A673 (cell line): ENCODE measurements at regions of chr1 and their contacts with region 1.

Region 1: GRCh38 chr1:23426828-23427227 is 2.3 kb upstream of the TCEA3 start:
- DNase-seq: no peak
- H3K4me3 ChIP-seq: no peak overlapping the region
- H3K27ac ChIP-seq: no peak overlapping the region
- H3K4me1 ChIP-seq: peaks cover 3% of the 10 kb centered on the region
- H3K27me3 ChIP-seq: no peaks in the 10 kb centered on the region
- CTCF ChIP-seq: no peak

Region 2: DNA sequence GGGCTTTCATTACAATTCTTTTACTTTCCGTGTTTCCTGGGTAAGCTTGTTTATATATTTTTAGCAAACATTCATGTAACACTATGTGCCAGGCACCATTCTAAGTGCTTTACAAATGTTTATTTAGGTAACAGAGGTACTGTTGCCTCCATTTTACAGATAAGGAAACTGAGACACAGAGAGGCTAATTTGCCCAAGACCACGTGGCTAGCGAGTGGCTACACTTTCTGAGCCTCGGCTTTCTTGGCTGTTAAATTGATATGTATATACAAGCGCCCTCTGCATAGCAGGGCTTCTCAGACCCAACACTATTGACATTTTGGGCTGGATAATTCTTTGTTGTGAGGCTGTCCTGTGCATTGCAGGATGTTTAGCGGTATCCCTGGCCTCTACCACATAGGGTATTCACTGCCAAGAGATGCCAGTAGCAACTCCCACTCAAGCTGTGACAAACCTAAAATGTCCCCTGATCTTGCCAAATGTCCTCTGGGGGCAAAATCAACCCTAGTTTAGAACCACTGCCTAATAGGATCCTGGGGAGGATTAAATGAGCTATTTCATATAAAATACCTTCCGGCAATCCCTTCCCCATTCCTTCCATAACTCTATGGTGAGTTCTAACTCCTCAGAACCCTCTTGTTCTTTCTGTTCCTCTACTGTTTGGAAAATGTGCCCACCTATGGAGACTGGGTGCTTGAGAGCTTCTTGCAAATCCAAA is 149.7 kb after region 1 on chr1:
- CTCF ChIA-PET with region 1: no interaction called
- POLR2A ChIA-PET with region 1: interaction called, 15 read pairs
- intact Hi-C with region 1: no loop called
- DNase-seq: no peak
- H3K4me3 ChIP-seq: no peak overlapping the region
- H3K27ac ChIP-seq: no peak overlapping the region
- H3K4me1 ChIP-seq: no peaks in the 10 kb centered on the region
- H3K27me3 ChIP-seq: no peaks in the 10 kb centered on the region
- CTCF ChIP-seq: no peak